Activated T-helper 1 cell treated with anti-CD3 and anti-CD28 coated beads, Interleukin-12 subunit alpha, Interleukin-12 subunit beta, Interleukin-2, Interleukin-4 antibody, amounts not matched to agents 30 ng/mL and 10 ng/mL and 1 ng/mL, durations not matched to agents 14 hours and 24 hours and 36 hours (primary cell): ENCODE measurements at regions of chr1 and their contacts with region 1.

Region 1: DNA sequence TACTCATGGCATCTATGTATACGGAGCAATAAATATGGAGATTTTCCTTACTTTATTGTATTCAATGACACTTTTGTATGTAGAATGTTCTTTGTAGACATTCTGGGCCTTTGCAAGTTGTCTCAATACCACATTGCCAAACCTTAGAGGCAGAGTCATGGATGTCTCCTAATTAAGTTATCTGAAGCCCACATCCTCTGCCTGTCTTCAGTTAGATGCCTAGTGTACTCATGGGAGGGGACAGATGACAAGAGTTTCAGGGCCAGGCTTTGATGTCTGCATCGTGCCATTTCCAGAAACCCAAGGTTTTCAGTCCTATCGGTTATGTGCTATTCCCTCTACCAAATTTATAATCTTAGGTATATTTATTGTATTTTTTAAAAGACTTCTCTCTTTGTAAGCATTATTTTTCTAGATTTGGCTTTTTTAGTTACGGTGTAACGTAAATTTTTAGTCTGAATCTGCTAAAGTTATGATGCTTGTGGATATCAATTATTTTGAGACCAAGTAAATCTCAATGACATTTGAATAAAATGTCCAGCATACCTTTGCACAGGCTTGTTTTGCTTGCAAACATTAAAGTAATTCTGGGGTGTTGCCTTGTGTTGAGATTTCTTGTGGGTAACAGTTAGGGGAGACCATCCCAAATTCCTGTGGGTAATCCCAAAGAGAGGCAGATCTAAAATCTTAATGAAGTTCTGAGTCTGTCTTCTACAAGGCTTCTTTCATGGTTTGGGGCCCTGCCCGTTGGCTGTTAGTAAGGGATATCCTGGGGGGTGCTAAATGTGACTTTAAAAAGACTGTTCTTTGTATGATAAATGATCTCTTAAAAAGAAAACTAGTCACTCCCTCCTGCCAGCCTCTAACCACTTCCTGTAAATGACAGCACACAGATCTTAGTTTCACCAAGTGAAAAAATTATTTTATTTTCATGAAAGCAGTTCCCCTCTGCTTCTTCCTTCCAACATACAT is 8.0 kb upstream of the MACF1 start:
- DNase-seq: peak; percentile 51
- H3K4me3 Mint-ChIP-seq: peak overlapping the region; percentile 76
- H3K27ac Mint-ChIP-seq: peak overlapping the region; percentile 96
- H3K4me1 Mint-ChIP-seq: peaks cover 77% of the 10 kb centered on the region
- H3K27me3 Mint-ChIP-seq: no peaks in the 10 kb centered on the region

Region 2: GRCh38 chr1:39098546-39099250 is 97.8 kb before region 1 on chr1:
- intact Hi-C with region 1: loop called (anchors 1 kb)
- DNase-seq: peak; percentile 53
- H3K4me3 Mint-ChIP-seq: no peak overlapping the region
- H3K27ac Mint-ChIP-seq: peak overlapping the region; percentile 40
- H3K4me1 Mint-ChIP-seq: peaks cover 30% of the 10 kb centered on the region
- H3K27me3 Mint-ChIP-seq: peaks cover under 1% of the 10 kb centered on the region

Region 3: GRCh38 chr1:39142401-39143151 is 54.0 kb before region 1 on chr1:
- intact Hi-C with region 1: no loop called
- DNase-seq: no peak
- H3K4me3 Mint-ChIP-seq: no peak overlapping the region
- H3K27ac Mint-ChIP-seq: no peak overlapping the region
- H3K4me1 Mint-ChIP-seq: no peaks in the 10 kb centered on the region
- H3K27me3 Mint-ChIP-seq: peaks cover 20% of the 10 kb centered on the region

Region 4: DNA sequence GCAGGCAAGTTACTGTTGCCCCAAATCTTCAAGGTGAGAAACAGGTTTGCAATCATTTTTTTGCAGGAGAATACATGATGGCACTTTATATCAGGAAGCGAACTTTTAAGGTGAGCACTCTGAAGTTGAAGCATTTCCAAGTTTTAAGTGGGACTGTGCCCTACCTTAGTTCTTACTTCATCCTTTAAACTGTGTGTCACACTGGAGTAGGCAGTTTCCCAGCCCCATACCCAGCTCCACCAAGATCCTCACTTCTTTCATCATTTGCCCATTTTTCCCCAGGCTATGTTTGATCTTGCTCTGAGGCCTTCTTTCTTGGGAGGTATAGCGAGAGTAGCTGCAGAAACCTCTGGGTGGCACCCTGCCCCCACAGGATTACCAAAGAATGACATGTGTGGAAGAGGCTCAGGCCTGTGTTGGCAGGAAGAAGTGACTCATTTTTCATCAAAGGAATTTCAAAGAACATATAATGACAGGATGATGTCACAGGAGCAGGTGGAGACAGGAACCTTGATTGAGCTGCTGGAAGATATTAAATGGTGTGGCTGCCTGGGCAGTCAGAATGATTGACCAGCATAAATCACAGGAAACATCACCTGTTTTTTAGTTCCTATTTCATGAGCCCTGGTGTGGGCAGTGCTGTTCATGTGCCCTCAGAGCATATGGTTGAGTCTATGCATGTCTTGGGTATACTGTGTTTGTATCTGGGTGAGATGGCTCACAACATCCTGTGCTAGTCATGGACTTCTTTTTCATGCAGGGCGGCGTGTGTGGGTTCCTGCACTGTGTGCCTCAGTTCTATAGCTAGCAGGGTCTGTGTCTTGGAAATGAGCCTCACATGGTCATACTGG is 12.8 kb before region 1 on chr1:
- intact Hi-C with region 1: loop called (anchors 1 kb)
- DNase-seq: peak; percentile 78
- H3K4me3 Mint-ChIP-seq: peak overlapping the region; percentile 57
- H3K27ac Mint-ChIP-seq: peak overlapping the region; percentile 97
- H3K4me1 Mint-ChIP-seq: peaks cover 53% of the 10 kb centered on the region
- H3K27me3 Mint-ChIP-seq: no peaks in the 10 kb centered on the region

Region 5: DNA sequence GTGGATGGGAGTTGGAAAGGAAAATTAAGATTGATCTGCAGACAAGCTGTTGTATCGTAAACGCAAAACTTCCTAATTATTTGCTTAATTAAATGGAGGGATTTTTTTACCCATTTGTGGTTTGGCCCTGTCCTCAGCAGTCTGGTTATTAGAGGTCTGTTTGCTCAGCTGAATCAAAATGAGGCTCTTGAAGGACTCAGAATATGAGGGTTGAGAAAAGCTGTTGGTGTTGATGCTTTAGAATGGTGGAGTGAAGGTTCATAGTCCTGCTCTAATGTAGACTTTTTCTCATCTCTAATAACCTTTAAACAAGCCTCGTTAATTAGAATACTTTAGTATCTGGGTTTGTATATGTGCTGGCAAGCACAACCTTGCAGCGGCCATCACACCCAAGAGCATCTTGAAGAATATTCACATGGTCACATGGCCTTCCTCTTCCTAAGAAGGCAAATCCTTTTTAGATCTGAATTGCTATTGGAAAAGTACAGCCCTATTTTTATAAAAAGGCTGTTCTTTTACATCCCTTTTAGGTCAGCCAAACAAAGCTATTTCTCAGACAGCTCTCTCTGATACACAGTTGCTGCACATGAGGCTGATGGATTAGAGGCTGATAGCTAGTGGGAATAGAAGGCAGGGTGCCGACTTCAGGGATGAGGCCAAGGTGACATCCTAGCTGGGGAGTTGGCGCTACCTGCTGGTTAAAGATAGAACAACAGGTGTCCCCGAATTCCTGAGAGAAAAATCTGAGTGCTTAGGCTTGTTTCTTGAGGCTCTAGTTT is 61.8 kb after region 1 on chr1:
- intact Hi-C with region 1: loop called (anchors 1 kb)
- DNase-seq: peak; percentile 33
- H3K4me3 Mint-ChIP-seq: no peak overlapping the region
- H3K27ac Mint-ChIP-seq: peak overlapping the region; percentile 46
- H3K4me1 Mint-ChIP-seq: peaks cover 32% of the 10 kb centered on the region
- H3K27me3 Mint-ChIP-seq: no peaks in the 10 kb centered on the region

Region 6: GRCh38 chr1:39422614-39423013 is 226.1 kb after region 1 on chr1:
- intact Hi-C with region 1: no loop called
- DNase-seq: no peak
- H3K4me3 Mint-ChIP-seq: no peak overlapping the region
- H3K27ac Mint-ChIP-seq: no peak overlapping the region
- H3K4me1 Mint-ChIP-seq: peaks cover 5% of the 10 kb centered on the region
- H3K27me3 Mint-ChIP-seq: no peaks in the 10 kb centered on the region

Region 7: DNA sequence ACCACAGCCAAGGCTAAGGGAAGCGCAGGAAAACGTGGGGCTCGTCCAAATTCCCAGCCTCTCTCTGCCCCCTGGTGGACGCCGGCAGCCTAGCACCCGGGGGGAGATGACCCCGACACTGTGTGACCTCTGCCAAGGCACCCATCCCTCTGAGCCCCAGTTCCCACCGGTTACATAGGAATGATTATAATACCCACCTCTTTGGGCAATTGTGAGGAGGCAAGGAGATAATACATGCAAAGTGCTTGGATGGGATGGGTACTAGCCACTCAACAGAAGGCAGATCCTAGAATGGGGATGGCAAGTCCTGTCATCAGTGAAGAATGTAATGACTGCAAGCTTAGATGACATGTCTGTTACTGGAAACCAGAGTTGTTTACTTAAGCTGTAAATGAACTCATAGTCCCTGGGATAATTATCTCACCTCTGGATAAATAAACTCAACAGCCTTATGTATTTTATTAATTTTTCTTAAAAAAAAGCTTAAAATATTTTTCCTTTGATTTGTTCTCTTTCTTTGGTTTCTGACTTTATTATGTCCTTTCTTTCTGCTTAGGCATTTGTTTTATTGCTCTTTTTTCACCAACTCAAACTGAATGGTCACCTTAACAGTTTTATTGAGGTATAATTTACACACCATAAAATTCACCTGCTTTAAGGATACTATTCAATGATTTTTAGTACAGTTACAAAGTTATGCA is 603.4 kb after region 1 on chr1:
- intact Hi-C with region 1: loop called (anchors 1 kb)
- DNase-seq: peak; percentile 41
- H3K4me3 Mint-ChIP-seq: peak overlapping the region; percentile 60
- H3K27ac Mint-ChIP-seq: peak overlapping the region; percentile 80
- H3K4me1 Mint-ChIP-seq: peaks cover 12% of the 10 kb centered on the region
- H3K27me3 Mint-ChIP-seq: peaks cover 4% of the 10 kb centered on the region